ENCODE measurements at regions of chr4 and their contacts with region 1.

Region 1: GRCh38 chr4:164293203-164293602 is 460.7 kb upstream of the SMIM31 start:
- DNase-seq: no peak
- CTCF ChIP-seq: no peak

Region 2: GRCh38 chr4:164304101-164304639 is 11.0 kb after region 1 on chr4:
- CTCF ChIA-PET with region 1: interaction called, 14 read pairs
- POLR2A ChIA-PET with region 1: no interaction called
- DNase-seq: peak; percentile 8
- CTCF ChIP-seq: no peak

Region 3: GRCh38 chr4:164501074-164501473 is 207.9 kb after region 1 on chr4:
- CTCF ChIA-PET with region 1: no interaction called
- POLR2A ChIA-PET with region 1: no interaction called
- DNase-seq: no peak
- CTCF ChIP-seq: no peak

Region 4: DNA sequence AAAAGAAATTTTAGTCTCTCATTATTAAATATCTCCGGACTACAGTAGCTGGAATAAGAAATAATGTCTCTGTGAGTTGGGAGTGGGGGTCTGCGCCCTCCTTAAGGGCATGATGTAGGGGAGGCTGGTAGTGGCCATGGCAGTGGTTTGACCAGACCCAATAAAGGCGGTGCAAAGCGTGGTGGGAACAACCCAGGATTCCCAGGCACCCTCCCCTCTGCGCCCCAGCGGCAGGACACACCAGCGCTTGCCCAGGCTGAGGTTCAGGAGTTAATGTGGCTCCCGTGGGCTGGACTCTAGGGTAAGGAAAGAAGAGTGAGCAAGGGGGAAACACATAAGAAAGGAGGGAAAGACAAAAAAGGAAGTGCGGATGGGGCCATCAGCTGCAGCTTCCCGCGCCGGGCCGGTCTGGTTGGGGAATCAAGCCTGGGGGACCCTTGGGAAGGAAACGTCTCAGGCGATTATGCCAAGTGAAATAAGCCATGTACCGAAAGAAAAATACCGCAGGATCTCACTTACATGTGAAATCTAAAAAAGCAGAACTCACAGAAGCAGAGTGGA is 303.2 kb after region 1 on chr4:
- CTCF ChIA-PET with region 1: no interaction called
- POLR2A ChIA-PET with region 1: no interaction called
- DNase-seq: no peak
- CTCF ChIP-seq: no peak

Measured in GM10248 (cell line).